Activated CD4-positive, alpha-beta T cell treated with anti-CD3 and anti-CD28 coated beads for 36 hours (primary cell): ENCODE measurements at regions of chr21 and their contacts with region 1.

Region 1: GRCh38 chr21:46228345-46229051 is at the start of gene LSS:
- DNase-seq: peak; percentile 98
- ATAC-seq: peak; percentile 95
- H3K4me3 Mint-ChIP-seq: peak within 1 kb of the TSS; percentile 77
- H3K27ac Mint-ChIP-seq: peak within 1 kb of the TSS; percentile 91
- H3K4me1 Mint-ChIP-seq: peaks cover 41% of the 10 kb centered on the region
- H3K27me3 Mint-ChIP-seq: no peaks in the 10 kb centered on the region
- total RNA-seq, gene LSS: 14.1 to 21.3 TPM

Region 2: DNA sequence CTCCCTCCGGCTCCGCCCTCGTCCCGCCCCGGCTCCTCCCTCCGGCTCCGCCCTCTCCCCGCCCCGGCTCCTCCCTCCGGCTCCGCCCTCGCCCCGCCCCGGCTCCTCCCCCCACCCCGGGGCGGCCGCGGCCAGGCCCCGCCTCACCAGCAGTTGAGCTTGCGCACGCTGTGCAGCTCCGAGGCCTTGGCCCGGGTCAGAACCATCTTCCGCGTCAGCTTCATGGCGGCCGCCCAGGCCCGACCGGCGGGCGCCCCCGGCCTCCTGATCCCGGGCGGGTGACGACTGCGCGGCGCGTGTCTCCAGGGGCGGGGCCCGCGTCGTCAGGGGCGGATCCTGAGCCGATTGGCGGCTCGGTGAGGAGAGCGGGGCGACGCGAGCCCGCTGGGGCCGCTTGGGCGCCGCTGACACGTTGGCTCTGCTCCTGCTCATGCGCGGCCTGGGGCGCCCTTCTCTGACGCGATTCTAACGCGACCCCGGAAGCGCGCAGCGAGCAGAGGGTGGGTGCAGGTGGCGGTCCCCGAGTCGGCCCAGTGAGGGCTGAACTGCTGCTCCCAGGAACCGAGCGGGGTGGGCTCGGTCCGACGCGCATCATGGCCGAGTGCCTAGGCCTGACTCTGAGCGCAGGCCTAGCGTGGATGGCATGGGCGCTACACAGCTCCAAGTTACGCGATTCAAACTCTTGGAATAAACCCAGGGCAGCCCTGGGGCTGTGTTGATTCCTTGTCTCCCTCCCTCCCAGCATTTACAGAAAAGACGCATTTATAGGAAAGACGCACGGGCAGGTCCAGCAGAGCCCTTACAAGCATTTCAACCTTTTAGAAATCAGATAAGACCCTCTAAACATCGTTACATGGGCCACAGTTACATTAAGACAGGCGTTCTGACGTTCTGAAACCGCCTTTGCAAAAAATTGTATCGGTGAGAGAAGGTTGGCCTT is 1889.3 kb before region 1 on chr21 and contains the start of gene CFAP410:
- CTCF ChIA-PET with region 1: no interaction called
- POLR2A ChIA-PET with region 1: no interaction called
- intact Hi-C with region 1: loop called in 1 of 2 experiments (anchors 5 kb)
- DNase-seq: peak; percentile 97
- ATAC-seq: peak; percentile 97
- H3K4me3 Mint-ChIP-seq: peak within 1 kb of the TSS; percentile 96
- H3K27ac Mint-ChIP-seq: peak within 1 kb of the TSS; percentile 98
- H3K4me1 Mint-ChIP-seq: peaks cover 18% of the 10 kb centered on the region
- H3K27me3 Mint-ChIP-seq: no peaks in the 10 kb centered on the region
- total RNA-seq, gene CFAP410: 7.3 to 11.4 TPM

Region 3: DNA sequence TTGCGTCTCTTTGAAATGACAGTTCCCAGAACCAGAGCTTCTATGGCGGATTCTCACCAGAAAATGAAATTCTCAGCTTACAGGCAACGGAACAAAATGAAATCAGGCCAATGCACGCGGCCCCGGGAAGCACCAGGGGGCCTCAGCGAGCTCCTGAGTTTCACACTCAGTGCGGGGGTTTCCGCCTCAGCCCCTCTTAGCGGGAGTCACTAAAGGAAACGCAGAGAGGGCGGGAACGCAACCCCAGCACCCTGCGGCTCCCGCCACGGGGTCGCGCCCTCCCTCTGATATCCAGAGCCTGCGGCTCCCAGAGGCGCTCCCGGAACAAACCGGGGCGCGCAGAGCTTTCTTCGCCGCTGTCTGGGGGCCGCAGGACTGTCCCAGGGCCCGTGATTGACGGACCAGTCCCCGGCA is 254.8 kb before region 1 on chr21:
- CTCF ChIA-PET with region 1: interaction called, 5 read pairs
- POLR2A ChIA-PET with region 1: no interaction called
- intact Hi-C with region 1: loop called in 1 of 2 experiments (anchors 2 kb)
- DNase-seq: peak; percentile 89
- ATAC-seq: peak; percentile 80
- H3K4me3 Mint-ChIP-seq: peak overlapping the region; percentile 51
- H3K27ac Mint-ChIP-seq: peak overlapping the region; percentile 60
- H3K4me1 Mint-ChIP-seq: peaks cover 16% of the 10 kb centered on the region
- H3K27me3 Mint-ChIP-seq: peaks cover 18% of the 10 kb centered on the region

Region 4: GRCh38 chr21:46097336-46098293 is 130.9 kb before region 1 on chr21 and contains the start of gene COL6A2:
- CTCF ChIA-PET with region 1: no interaction called
- POLR2A ChIA-PET with region 1: no interaction called
- intact Hi-C with region 1: loop called in 1 of 2 experiments (anchors 2 kb)
- DNase-seq: peak; percentile 77
- ATAC-seq: peak; percentile 96
- H3K4me3 Mint-ChIP-seq: peak within 1 kb of the TSS; percentile 52
- H3K27ac Mint-ChIP-seq: no peak within 1 kb of the TSS
- H3K4me1 Mint-ChIP-seq: peaks cover 2% of the 10 kb centered on the region
- H3K27me3 Mint-ChIP-seq: peaks cover 22% of the 10 kb centered on the region
- total RNA-seq, gene COL6A2: 3.3 to 3.4 TPM

Region 5: DNA sequence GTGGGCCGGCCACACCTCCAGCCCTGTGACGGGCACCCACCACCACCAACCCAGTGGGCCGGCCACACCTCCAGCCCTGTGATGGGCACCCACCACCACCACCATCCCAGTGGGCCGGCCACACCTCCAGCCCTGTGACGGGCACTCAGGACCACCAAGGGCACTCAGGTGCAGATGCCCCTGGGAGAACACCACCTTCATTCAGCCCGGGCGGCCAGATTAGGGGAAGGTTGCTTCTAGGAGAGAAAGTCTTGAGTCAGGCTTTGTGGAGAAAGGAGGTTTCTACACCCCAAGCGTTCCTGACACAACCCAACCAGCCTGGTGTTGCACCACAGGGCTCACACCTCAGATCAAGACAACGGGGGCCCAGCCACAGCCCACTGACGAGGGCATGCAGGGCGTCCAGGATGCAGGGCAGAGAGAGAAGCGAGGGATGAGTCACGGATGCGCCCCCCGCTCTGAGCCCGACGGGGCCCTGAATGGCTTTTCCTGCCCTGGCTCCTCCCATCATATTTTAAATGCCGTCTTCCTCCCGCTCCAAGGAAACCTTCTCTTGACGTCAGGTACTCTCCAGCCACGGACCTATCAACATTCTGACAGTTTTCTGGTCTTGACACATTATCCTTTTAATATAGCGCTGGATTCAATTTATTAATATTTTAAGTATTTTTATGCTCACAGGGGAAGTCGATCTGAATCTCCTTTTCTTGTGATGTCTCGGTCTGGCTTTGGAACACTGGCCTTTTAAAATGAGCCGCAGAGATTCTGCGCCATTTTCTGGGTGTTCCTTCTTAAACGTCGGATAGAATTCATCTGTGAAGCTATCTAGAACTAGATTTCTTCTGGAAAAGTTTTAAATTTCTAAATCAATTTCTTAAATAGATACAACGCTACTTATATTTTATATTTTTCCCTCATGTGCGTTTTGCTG is 43.6 kb before region 1 on chr21:
- CTCF ChIA-PET with region 1: no interaction called
- POLR2A ChIA-PET with region 1: no interaction called
- intact Hi-C with region 1: loop called (anchors 1 to 2 kb)
- DNase-seq: peak; percentile 75
- ATAC-seq: peak; percentile 82
- H3K4me3 Mint-ChIP-seq: peak overlapping the region; percentile 77
- H3K27ac Mint-ChIP-seq: peak overlapping the region; percentile 63
- H3K4me1 Mint-ChIP-seq: peaks cover 4% of the 10 kb centered on the region
- H3K27me3 Mint-ChIP-seq: no peaks in the 10 kb centered on the region

Region 6: DNA sequence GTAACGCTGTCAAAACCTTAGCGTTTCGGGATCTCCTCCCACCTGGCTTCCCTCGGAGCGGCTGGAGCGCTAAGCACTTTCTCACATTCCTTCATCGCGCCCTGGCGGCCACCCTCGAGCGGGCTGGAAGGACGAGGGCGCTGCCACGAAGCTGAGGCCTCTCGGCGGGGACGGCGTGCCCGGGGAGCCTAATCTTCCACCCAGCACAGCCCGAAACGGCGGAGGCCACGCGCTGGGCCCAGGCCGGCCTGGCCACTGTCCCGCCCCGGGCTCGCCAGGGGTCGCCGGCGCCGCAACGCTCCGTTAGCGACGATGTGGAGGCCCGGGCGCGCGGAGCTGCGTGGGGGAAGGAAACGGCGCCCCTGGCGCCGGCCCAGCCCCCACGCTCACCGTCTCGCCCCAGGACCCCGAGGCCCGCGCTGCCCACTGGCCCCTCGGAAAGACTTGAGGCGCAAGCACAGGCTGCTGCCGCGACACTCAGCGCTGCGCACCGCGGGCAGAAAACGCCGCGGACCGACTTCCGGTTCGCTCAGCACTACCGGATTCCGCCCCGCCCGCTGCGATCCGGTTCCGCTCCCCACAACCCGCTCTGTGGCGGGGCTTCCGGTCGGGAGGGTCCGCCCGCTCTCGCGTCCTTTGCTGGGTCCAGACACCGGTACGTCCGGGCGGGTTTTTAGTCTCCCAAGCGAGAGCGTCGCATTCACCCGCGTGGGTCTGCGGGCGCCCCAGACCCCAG is 57.4 kb after region 1 on chr21 and contains the start of gene YBEY:
- CTCF ChIA-PET with region 1: no interaction called
- POLR2A ChIA-PET with region 1: no interaction called
- intact Hi-C with region 1: loop called (anchors 1 to 5 kb)
- DNase-seq: peak; percentile 94
- ATAC-seq: peak; percentile 94
- H3K4me3 Mint-ChIP-seq: peak within 1 kb of the TSS; percentile 88
- H3K27ac Mint-ChIP-seq: peak within 1 kb of the TSS; percentile 98
- H3K4me1 Mint-ChIP-seq: peaks cover 52% of the 10 kb centered on the region
- H3K27me3 Mint-ChIP-seq: no peaks in the 10 kb centered on the region
- total RNA-seq, gene YBEY: 16.9 to 20.6 TPM

Region 7: DNA sequence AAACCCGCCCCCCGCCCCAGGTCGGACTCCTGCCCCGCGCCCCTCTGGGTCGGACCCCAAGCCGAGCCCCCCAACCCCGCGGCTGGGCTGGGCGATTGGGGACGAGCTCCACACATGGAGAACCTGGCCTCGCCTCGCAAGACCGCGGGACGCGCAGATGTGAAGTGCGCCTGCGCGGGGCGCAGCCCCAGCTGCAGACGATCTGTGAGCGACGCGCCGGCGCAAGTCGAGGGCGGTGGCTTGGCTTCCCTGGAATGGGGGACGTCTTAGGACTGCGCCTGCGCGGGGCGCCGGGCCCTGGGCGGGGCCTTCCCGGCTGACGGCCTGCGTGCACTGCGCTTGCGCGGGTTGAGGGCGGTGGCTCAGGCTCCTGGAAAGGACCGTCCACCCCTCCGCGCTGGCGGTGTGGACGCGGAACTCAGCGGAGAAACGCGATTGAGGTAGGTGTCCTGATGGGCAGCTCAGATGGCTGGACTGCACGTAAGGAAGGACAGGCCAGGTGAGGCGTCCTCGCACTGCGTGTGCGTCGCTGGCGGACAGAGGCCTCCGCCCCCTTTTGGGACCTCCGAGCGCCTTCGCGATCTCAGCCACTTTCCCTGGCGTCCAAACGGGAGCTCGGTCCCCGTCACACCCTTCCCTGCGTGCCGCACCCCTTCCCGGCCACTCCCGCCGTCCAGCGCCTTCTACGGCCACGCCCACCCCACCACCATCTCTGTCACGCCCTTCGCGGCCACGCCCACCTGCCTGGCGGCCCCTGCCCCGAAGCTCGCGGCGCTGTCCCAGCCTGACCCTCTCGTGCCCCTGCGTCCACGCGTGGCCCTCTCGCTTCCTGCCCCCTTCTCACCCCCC is 407.1 kb after region 1 on chr21 and contains the start of gene PRMT2:
- CTCF ChIA-PET with region 1: no interaction called
- POLR2A ChIA-PET with region 1: no interaction called
- intact Hi-C with region 1: loop called in 1 of 2 experiments (anchors 1 kb)
- DNase-seq: peak; percentile 99
- ATAC-seq: peak; percentile 82
- H3K4me3 Mint-ChIP-seq: peak within 1 kb of the TSS; percentile 95
- H3K27ac Mint-ChIP-seq: peak within 1 kb of the TSS; percentile 90
- H3K4me1 Mint-ChIP-seq: peaks cover 68% of the 10 kb centered on the region
- H3K27me3 Mint-ChIP-seq: no peaks in the 10 kb centered on the region
- total RNA-seq, gene PRMT2: 60.9 to 74.1 TPM